ENCODE measurements at regions of chr1 and their contacts with region 1.

Region 1: GRCh38 chr1:25198663-25199252 is 33.5 kb downstream of the SYF2 start:
- DNase-seq: peak in 4 of 6 donors; percentile 22 to 38 (median 30)
- ATAC-seq: peak; percentile 61 to 85 (median 77)
- H3K4me3 ChIP-seq: no peak overlapping the region
- H3K27ac ChIP-seq: peak overlapping the region; percentile 26 to 64 (median 62)
- H3K4me1 ChIP-seq: no peaks in the 10 kb centered on the region
- H3K27me3 ChIP-seq: no peaks in the 10 kb centered on the region
- CTCF ChIP-seq: no peak

Region 2: GRCh38 chr1:24861821-24862727 is 336.7 kb before region 1 on chr1:
- intact Hi-C with region 1: loop called in 1 of 3 experiments (anchors 10 kb)
- DNase-seq: no peak
- ATAC-seq: no peak
- H3K4me3 ChIP-seq: no peak overlapping the region
- H3K27ac ChIP-seq: no peak overlapping the region
- H3K4me1 ChIP-seq: no peaks in the 10 kb centered on the region
- H3K27me3 ChIP-seq: no peaks in the 10 kb centered on the region
- CTCF ChIP-seq: no peak

Region 3: DNA sequence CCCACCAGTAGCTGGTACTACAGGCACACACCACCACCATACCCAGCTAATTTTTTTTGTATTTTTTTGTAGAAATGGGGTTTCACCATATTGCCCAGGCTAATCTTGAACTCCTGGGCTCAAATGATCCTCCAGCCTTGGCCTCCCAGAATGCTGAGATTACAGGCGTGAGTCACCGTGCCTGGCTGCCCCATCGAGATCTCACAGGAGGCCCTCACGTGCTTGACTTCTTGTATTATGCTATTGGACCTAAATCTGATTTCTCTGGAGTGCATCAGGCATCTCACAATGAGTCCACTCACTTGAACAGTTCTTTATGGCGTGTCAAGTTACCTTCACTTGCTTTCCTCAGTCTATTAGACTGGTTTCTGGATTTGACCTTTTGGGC is 57.8 kb after region 1 on chr1:
- intact Hi-C with region 1: no loop called
- DNase-seq: no peak
- ATAC-seq: no peak
- H3K4me3 ChIP-seq: no peak overlapping the region
- H3K27ac ChIP-seq: no peak overlapping the region
- H3K4me1 ChIP-seq: no peaks in the 10 kb centered on the region
- H3K27me3 ChIP-seq: no peaks in the 10 kb centered on the region
- CTCF ChIP-seq: no peak